Activated naive CD4-positive, alpha-beta T cell treated with anti-CD3 and anti-CD28 coated beads for 36 hours (primary cell): ENCODE measurements at regions of chr19 and their contacts with region 1.

Region 1: GRCh38 chr19:19444681-19445155 is 39.2 kb downstream of the GATAD2A start:
- DNase-seq: peak; percentile 47
- H3K4me3 Mint-ChIP-seq: no peak overlapping the region
- H3K27ac Mint-ChIP-seq: peak overlapping the region; percentile 66
- H3K4me1 Mint-ChIP-seq: peaks cover 72% of the 10 kb centered on the region
- H3K27me3 Mint-ChIP-seq: no peaks in the 10 kb centered on the region

Region 2: GRCh38 chr19:19410275-19411192 is 34.2 kb before region 1 on chr19:
- CTCF ChIA-PET with region 1: interaction called, 5 read pairs
- intact Hi-C with region 1: loop called (anchors 2 kb)
- DNase-seq: peak; percentile 65
- H3K4me3 Mint-ChIP-seq: no peak overlapping the region
- H3K27ac Mint-ChIP-seq: peak overlapping the region; percentile 47
- H3K4me1 Mint-ChIP-seq: peaks cover 76% of the 10 kb centered on the region
- H3K27me3 Mint-ChIP-seq: no peaks in the 10 kb centered on the region

Region 3: GRCh38 chr19:19434483-19435045 is 10.2 kb before region 1 on chr19:
- CTCF ChIA-PET with region 1: interaction called, 4 read pairs
- intact Hi-C with region 1: loop called (anchors 1 kb)
- DNase-seq: no peak
- H3K4me3 Mint-ChIP-seq: no peak overlapping the region
- H3K27ac Mint-ChIP-seq: no peak overlapping the region
- H3K4me1 Mint-ChIP-seq: peaks cover 50% of the 10 kb centered on the region
- H3K27me3 Mint-ChIP-seq: no peaks in the 10 kb centered on the region

Region 4: DNA sequence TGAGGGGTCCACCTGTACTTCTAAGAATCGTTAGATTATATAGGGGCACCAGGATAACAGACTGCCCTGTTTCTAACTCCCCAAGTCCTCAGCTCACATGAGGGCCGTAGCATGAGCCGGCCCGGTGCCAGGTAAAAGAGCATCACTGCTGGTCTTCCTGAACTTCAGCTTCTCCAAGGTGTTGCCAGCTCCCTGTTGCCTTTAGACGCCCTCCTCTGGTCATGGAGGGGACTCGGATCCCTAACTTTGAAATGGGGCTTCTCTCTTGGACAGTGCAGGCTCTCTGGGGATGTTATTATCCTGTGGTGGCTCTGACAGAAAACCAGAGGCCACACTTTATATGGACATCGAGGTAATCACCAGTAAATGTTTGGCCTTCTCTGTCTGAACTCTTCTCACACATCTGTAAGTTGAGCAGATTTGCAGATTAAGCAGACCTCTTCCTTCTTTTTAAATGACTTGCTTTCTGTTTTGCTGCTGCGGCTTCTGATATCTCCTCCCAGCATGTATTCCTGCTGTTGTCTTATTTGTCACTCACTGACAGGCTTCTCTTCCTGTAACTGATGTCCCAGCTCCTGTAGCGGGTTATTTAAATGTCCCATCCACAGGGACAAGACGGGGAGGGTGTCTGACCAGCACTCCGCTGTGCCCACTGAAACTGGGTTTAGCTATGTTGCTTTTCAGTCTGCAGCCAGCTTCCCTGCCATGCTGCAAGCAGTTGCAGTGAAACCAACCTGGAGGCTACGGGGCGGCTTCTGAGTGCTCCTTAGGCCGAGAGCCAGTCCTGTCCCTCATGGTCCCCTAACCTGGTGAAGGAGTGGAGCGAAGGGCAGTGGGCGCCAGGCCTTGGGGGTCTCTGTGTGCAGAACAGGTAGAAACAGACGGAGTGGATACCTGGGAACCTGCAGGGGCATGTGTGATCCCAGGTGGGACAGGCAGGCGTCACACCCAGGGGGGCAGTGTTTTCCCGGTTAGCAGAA is 31.4 kb after region 1 on chr19:
- CTCF ChIA-PET with region 1: interaction called, 3 read pairs
- intact Hi-C with region 1: loop called (anchors 2 kb)
- DNase-seq: no peak
- H3K4me3 Mint-ChIP-seq: no peak overlapping the region
- H3K27ac Mint-ChIP-seq: no peak overlapping the region
- H3K4me1 Mint-ChIP-seq: peaks cover 76% of the 10 kb centered on the region
- H3K27me3 Mint-ChIP-seq: no peaks in the 10 kb centered on the region

Region 5: DNA sequence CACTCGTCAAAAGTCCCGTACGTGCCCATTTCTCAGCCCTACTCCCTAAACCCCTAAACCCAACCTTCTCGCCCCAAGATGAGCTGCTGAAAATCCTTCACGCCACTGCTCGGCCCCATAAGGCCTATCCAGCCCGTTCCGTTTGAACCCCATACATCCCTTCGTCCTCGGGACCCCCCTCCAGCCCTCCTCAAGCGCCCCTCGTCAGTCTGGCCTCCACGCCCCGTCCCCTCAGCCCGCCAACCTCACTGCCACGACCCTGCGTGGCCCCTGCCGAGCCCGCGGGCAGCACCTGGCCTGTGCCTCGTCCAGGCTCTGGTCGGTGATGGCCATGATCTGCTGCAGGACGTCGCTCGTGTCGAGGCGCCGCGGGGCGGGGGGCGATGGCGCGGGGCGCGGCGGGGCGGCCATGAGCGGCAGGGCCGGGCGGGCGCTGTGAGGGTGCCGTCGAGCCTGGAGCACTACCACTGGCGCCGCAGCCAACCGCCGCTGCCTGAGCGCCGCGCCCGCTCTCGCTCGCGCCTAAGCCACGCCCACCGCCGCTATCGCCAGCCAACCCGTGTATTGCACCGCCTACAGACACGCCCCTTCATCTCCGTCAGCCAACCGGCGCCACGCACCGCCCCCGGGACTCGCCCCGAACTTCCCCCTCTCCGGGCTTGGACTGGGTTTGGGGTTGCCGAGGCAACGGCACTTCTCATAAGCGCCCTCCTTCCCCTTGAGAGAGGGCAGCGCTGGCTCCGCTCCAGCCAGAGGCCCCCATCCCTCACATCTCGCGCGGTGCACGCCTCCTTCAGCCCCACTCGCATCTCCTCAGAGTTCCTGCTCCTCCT is 173.7 kb after region 1 on chr19 and contains the start of gene PBX4:
- CTCF ChIA-PET with region 1: no interaction called
- intact Hi-C with region 1: no loop called
- DNase-seq: peak; percentile 99
- H3K4me3 Mint-ChIP-seq: peak within 1 kb of the TSS; percentile 81
- H3K27ac Mint-ChIP-seq: peak within 1 kb of the TSS; percentile 46
- H3K4me1 Mint-ChIP-seq: peaks cover 43% of the 10 kb centered on the region
- H3K27me3 Mint-ChIP-seq: no peaks in the 10 kb centered on the region
- total RNA-seq, gene PBX4: 13.5 to 17.5 TPM